Right cardiac atrium (tissue), 5 donors: ENCODE measurements at regions of chr6 and their contacts with region 1.

Region 1: GRCh38 chr6:154448448-154449096 is 61.9 kb downstream of the CNKSR3 start:
- DNase-seq: no peak
- ATAC-seq: peak; percentile 84 to 88
- H3K4me3 ChIP-seq: peak overlapping the region; percentile 16
- H3K27ac ChIP-seq: peak overlapping the region; percentile 62
- H3K4me1 ChIP-seq: peaks cover 7% of the 10 kb centered on the region
- H3K27me3 ChIP-seq: no peaks in the 10 kb centered on the region

Region 2: GRCh38 chr6:154491567-154492443 is 43.2 kb after region 1 on chr6:
- intact Hi-C with region 1: loop called in 1 of 4 experiments (anchors 10 kb)
- DNase-seq: no peak
- ATAC-seq: no peak
- H3K4me3 ChIP-seq: no peak overlapping the region
- H3K27ac ChIP-seq: no peak overlapping the region
- H3K4me1 ChIP-seq: peaks cover 18% of the 10 kb centered on the region
- H3K27me3 ChIP-seq: no peaks in the 10 kb centered on the region